Aorta (tissue), 5 donors: ENCODE measurements at regions of chr20 and their contacts with region 1.

Region 1: DNA sequence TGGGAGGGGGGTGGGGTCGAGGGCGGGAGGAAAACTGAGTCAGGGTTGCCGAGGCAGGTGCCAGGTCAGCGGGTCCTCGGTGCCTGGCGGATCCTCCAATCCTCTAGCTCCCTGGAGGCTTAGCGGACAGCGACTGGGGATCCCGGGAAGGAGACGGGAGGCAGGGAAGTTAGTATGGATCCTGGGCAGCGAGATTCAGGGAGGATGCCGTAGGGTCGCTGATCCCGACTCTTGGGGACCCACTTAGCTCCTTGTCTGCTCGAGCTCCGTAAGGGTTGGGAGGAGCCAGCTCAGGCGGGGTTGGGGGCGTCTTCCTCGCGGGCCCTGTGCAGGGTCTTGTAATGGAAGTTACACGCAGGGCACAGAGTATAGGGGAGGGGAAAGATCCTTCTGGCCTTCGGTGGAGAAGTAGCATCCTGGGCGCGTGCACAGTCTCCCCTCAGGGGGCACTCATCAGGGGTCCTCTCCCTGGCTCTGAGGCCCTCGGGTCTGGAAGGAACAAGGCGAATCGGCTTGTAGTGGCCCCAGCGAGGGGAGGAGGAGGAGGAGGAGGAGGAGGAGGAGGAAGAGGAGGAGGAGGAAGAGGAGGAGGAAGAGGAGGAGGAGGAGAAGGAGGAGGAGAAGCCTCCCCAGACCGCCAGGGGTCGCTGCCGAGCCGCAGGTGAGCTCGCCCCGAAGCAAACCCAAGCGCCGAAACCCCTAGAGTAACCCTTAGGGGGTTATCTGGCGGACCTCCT is 6.4 kb upstream of the SLC12A5 start:
- DNase-seq: peak; percentile 74 to 87
- ATAC-seq: peak; percentile 65
- H3K4me3 ChIP-seq: no peak overlapping the region
- H3K27ac ChIP-seq: no peak overlapping the region
- H3K4me1 ChIP-seq: no peaks in the 10 kb centered on the region
- H3K27me3 ChIP-seq: peaks cover 0 to 1% of the 10 kb centered on the region in 2 donors

Region 2: DNA sequence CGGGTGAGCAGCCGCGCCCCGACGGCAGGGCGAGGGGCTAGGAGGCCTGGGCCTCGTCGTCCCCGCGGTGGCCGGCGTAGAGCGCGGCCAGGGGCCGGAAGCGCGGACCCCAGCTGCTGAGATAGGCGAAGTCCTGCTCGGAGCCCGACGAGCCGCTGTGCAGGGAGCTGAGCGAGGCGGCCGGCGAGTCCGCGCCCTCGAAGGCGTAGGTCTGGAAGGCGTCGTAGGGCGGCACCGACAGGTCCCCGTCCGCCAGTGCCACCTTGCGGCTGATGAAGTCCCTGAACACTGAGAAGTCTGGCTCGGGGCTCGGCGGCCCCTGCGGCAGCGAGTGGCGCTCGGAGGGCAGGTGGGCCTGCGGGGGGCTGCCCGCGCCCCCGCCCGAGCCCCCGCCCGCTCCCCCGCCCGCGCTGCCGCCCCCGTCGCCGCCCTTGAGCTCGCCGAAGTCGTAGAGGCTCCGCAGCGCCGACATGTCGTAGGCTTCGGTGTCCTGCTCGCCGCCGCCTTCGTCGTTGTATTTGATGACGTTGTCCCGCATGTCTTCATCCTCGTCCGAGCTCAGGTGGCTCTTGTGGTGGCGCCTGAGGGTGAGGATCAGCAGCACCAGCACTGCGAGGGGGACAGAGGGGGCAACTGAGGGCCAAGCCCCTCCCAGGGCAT is 152.0 kb after region 1 on chr20:
- intact Hi-C with region 1: loop called (anchors 2 to 10 kb)
- DNase-seq: peak; percentile 72 to 90
- ATAC-seq: no peak
- H3K4me3 ChIP-seq: no peak overlapping the region
- H3K27ac ChIP-seq: no peak overlapping the region
- H3K4me1 ChIP-seq: no peaks in the 10 kb centered on the region
- H3K27me3 ChIP-seq: peaks cover 0 to 4% of the 10 kb centered on the region in 2 donors

Region 3: DNA sequence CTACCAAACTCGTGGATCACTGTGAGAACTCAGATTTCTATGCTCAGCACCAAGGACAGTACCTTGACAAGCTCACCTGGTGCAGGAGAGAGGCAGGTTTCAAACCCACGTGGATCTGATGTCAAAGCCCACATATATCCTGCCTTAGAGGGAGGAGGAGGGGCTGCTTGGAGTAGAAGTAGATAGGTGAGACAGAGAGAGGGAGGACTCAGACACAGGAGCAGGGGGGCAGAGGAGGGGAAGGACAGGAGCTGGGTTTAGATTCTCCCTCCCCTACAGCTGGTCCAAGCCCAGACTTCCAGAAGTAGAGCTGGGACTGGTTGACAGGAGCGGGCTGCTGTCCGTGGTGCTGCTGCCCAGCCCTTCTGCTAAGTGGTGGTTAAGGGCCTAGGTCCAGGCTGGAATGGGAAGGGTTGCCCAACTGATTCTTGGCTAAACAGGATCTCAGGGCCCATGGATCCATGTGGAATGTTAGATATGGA is 208.3 kb after region 1 on chr20:
- intact Hi-C with region 1: no loop called
- DNase-seq: no peak
- ATAC-seq: no peak
- H3K4me3 ChIP-seq: no peak overlapping the region
- H3K27ac ChIP-seq: no peak overlapping the region
- H3K4me1 ChIP-seq: no peaks in the 10 kb centered on the region
- H3K27me3 ChIP-seq: no peaks in the 10 kb centered on the region